Heart right ventricle (tissue), 16 donors: ENCODE measurements at regions of chr6 and their contacts with region 1.

Region 1: DNA sequence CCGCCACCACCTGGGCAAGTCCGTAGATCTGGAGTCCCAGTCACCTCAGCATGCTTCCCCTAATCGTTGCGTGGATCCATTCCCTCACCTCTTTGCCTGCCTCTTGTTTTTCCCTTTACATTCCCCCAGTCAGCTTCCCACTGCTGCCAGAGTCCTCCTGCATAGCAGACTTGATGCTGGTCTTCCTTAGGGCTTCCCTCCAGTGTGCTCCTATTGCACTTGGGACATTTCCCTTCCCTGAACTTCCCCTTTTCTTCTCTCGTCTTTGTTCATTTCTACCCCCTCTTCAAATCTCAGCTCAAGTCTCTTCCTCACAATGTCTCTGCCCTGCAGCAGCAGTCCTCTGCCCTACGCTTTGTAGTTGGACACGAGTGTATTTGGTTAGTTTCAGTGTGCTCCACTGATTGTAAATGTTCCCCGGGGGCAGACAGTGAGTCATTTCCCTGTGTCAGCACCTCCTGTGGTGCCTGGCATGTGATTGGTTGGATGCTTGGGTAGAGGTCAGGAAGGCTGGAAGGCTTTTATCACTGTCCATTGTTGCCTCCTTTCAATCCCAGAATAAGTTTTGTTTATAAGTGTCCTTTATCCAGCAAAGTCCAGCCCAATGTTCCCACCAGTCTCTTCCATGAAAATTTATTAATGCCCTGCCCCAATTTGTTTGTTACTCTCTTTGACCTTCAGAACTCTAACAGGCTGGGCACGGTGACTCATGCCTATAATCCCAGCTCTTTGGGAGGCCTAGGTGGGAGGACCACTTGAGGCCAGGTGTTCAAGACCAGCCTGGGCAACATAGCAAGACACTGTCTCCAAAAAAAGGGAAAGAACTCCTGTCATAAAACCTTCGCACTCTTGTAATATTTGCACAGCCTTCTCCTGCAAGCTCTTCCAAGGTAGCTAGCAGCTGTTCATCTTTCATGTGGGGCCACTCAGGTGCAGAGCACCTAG is 38.3 kb downstream of the FAM120B start:
- DNase-seq: peak in 1 of 2 donors; percentile 58
- ATAC-seq: peak in 7 of 8 donors; percentile 76 to 93 (median 88)
- H3K4me3 ChIP-seq: no peak overlapping the region
- H3K27ac ChIP-seq: peak overlapping the region in 3 of 10 donors; percentile 21 to 56 (median 49)
- H3K4me1 ChIP-seq: peaks cover 0 to 40% (median 18%) of the 10 kb centered on the region in 9 donors
- H3K27me3 ChIP-seq: no peaks in the 10 kb centered on the region
- CTCF ChIP-seq: no peak

Region 2: DNA sequence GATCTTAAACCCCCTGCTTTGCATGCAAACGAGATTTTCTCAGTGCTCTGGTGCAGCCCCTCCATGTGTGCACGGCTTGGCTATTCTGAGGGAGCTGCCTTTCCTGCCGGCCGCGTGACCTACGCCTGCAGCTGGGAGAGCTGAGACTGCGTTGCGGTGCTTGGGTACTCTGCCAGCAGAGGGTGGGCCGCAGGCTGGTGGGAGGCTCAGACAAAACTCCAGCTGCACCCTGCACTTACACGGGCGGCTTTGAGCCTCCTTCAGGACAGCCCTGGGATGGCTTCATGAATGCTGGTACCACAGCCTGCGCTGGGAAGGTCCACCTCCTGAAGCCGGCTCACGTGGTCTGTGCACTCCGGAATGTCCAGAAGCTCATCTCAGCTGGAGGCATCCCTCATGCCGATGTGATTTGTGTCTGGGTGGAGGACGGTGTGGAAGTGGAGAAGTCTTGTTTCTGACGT is 277.7 kb before region 1 on chr6:
- intact Hi-C with region 1: no loop called
- DNase-seq: peak in 1 of 2 donors; percentile 1
- ATAC-seq: no peak
- H3K4me3 ChIP-seq: no peak overlapping the region
- H3K27ac ChIP-seq: no peak overlapping the region
- H3K4me1 ChIP-seq: no peaks in the 10 kb centered on the region
- H3K27me3 ChIP-seq: peaks cover 0 to 16% (median 0%) of the 10 kb centered on the region in 7 donors
- CTCF ChIP-seq: no peak

Region 3: DNA sequence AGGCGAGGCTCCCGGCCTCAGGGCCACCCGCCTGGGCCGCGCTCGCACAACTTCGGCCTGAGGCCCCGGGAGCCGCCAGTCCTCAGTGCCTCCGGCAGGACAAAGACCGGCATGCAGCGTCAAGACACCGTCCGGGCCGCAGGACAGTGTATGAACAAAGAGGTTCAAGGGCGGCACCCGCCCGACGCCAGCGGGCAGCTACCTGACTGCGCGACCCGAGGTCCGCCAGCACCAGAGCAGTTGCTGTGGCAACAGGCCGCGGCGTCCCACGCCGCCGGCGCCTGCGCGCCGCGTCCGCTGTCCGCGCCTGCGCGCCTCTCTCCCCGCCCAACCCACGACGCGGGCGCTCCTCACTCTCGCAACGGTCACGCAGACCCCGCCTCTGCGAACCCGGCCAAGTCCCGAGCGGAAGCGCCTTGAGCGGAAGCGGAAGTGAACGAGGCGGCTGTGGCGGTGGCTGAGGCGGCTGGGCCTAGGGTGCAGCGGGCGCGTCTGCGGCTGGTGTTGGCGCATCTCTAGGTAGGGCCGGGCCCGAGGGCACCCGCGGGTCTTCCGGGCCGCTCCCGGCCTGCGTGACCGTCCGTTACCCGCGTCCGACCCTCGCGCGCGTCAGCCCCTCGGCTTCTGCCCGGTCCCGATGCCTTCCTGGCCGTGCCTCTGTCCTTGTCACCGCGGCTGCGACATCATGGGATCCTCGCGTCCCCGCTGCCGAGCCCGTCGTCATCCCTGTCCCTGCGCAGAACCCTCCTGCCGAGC is 38.4 kb before region 1 on chr6 and contains the start of gene FAM120B:
- intact Hi-C with region 1: loop called in 1 of 10 experiments (anchors 5 kb)
- DNase-seq: peak; percentile 97 to 98
- ATAC-seq: peak; percentile 98 to 99 (median 99)
- H3K4me3 ChIP-seq: peak within 1 kb of the TSS; percentile 59 to 98 (median 86)
- H3K27ac ChIP-seq: peak within 1 kb of the TSS; percentile 44 to 97 (median 93)
- H3K4me1 ChIP-seq: peaks cover 14 to 56% (median 46%) of the 10 kb centered on the region in 9 donors
- H3K27me3 ChIP-seq: no peaks in the 10 kb centered on the region
- CTCF ChIP-seq: no peak
- total RNA-seq, gene FAM120B: 16.0 to 31.0 (median 25.4) TPM